H1 (cell line): ENCODE measurements at regions of chr19 and their contacts with region 1.

Region 1: DNA sequence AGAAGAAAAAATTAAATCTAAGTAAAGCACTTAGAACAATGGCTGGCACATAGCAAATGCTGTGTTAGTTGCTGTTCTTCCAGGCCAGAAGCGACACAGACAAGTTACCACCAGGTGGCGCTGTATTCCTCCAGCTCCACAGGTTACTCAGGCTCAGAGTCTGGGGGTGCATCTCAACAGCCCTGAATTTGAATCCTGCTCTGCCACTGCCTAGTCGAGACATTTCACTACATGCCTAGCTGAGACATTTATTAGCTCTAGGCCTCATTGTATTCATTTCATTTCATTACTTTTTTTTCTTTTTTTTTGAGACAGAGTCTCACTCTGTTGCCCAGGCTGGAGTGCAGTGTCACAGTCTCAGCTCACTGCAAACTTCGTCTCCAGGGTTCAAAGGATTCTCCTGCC is 16.4 kb upstream of the CYP2B6 start:
- DNase-seq: peak; percentile 53 to 84
- H3K4me3 ChIP-seq: no peak overlapping the region
- H3K27ac ChIP-seq: no peak overlapping the region
- H3K4me1 ChIP-seq: no peaks in the 10 kb centered on the region
- H3K27me3 ChIP-seq: no peaks in the 10 kb centered on the region; a peak in 1 of 7 replicates
- CTCF ChIP-seq: peak; percentile 78 to 92 (median 84)
- EP300 ChIP-seq: no peak
- POLR2A ChIP-seq: no peak
- RAD21 ChIP-seq: peak; percentile 85 to 92

Region 2: GRCh38 chr19:40959338-40959737 is 15.3 kb before region 1 on chr19:
- CTCF ChIA-PET with region 1: interaction called, 12 read pairs
- POLR2A ChIA-PET with region 1: no interaction called
- DNase-seq: no peak
- H3K4me3 ChIP-seq: no peak overlapping the region
- H3K27ac ChIP-seq: no peak overlapping the region
- H3K4me1 ChIP-seq: no peaks in the 10 kb centered on the region
- H3K27me3 ChIP-seq: no peaks in the 10 kb centered on the region; a peak in 1 of 7 replicates
- CTCF ChIP-seq: no peak
- EP300 ChIP-seq: no peak
- POLR2A ChIP-seq: no peak
- RAD21 ChIP-seq: no peak

Region 3: DNA sequence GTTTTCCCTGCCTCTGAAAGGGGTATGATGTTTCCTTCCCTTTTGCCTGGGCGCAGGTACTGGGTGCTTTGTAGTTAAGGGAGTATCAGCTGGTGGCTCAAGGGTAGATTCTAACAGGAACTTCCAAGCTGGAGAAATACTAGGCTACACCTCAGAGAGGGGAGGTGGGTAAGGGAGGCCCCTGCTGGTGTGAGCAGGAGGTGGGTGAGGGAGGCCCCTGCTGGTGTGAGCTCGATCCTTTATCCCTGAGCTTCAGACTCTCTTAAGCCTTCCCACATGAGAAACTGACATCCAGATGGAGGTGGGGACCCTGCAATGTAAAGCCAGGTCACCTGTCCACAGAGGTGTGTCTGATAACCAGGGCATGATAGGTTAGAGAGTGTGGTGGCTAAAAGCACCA is 48.6 kb after region 1 on chr19:
- CTCF ChIA-PET with region 1: interaction called, 15 read pairs
- POLR2A ChIA-PET with region 1: no interaction called
- DNase-seq: no peak
- H3K4me3 ChIP-seq: no peak overlapping the region
- H3K27ac ChIP-seq: no peak overlapping the region
- H3K4me1 ChIP-seq: no peaks in the 10 kb centered on the region; a peak in 1 of 7 replicates
- H3K27me3 ChIP-seq: peaks cover 0 to 9% (median 8%) of the 10 kb centered on the region in 4 experiments; a peak in 3 of 7 replicates
- CTCF ChIP-seq: peak; percentile 35 to 55 (median 36)
- EP300 ChIP-seq: no peak
- POLR2A ChIP-seq: no peak
- RAD21 ChIP-seq: peak; percentile 52 to 55